Activated naive CD4-positive, alpha-beta T cell treated with anti-CD3 and anti-CD28 coated beads for 36 hours (primary cell): ENCODE measurements at regions of chr3 and their contacts with region 1.

Region 1: DNA sequence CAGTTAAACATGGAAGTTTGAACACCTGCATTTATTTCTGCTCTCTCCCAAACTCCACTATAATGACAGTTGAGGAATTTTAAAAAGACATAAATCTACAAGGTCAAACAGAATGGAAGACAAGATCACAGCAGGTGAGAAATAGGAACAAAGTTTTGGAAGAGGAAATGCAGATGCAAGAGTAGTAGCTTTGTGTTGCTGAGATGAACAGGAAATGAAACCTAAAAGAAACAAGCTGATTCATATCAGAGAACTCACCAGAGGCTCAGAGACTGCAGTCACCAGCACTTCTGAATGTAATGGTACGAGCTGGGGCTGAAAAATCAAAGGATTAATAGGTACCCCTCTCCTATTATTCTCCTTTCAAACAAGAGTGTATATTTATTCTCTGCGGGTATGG is 459.9 kb downstream of the RAP2B start:
- DNase-seq: peak; percentile 33
- H3K4me3 Mint-ChIP-seq: no peak overlapping the region
- H3K27ac Mint-ChIP-seq: peak overlapping the region; percentile 78
- H3K4me1 Mint-ChIP-seq: peaks cover 57% of the 10 kb centered on the region
- H3K27me3 Mint-ChIP-seq: no peaks in the 10 kb centered on the region

Region 2: GRCh38 chr3:152205097-152205593 is 1416.8 kb before region 1 on chr3:
- CTCF ChIA-PET with region 1: no interaction called
- intact Hi-C with region 1: loop called (anchors 10 kb)
- DNase-seq: no peak
- H3K4me3 Mint-ChIP-seq: peak overlapping the region; percentile 89
- H3K27ac Mint-ChIP-seq: peak overlapping the region; percentile 99
- H3K4me1 Mint-ChIP-seq: peaks cover 67% of the 10 kb centered on the region
- H3K27me3 Mint-ChIP-seq: no peaks in the 10 kb centered on the region

Region 3: DNA sequence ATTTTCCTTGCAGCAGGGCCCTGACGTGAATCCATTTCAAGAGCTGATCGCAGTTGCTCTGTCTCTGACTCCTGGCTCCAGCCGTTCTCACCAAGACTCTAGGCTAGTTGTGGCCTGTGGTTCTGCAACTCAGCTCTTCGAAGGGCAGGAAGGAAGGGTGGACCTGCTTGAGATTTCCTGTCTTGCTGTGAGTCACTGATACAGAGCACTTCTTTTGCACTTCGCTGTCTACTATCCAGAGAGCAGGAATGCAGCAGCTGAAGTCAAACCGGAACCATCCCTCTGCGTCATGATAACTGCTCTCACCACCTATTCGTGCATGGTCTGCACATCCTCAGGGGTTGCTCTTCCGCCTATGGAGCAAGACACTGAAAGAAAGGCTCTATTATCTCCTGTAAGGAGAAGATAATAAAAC is 400.2 kb before region 1 on chr3:
- CTCF ChIA-PET with region 1: no interaction called
- intact Hi-C with region 1: loop called (anchors 2 kb)
- DNase-seq: peak; percentile 73
- H3K4me3 Mint-ChIP-seq: peak overlapping the region; percentile 66
- H3K27ac Mint-ChIP-seq: peak overlapping the region; percentile 85
- H3K4me1 Mint-ChIP-seq: peaks cover 53% of the 10 kb centered on the region
- H3K27me3 Mint-ChIP-seq: no peaks in the 10 kb centered on the region

Region 4: GRCh38 chr3:153443961-153444360 is 178.0 kb before region 1 on chr3:
- CTCF ChIA-PET with region 1: interaction called, 3 read pairs
- intact Hi-C with region 1: loop called (anchors 5 kb)
- DNase-seq: no peak
- H3K4me3 Mint-ChIP-seq: no peak overlapping the region
- H3K27ac Mint-ChIP-seq: no peak overlapping the region
- H3K4me1 Mint-ChIP-seq: peaks cover 16% of the 10 kb centered on the region
- H3K27me3 Mint-ChIP-seq: no peaks in the 10 kb centered on the region

Region 5: DNA sequence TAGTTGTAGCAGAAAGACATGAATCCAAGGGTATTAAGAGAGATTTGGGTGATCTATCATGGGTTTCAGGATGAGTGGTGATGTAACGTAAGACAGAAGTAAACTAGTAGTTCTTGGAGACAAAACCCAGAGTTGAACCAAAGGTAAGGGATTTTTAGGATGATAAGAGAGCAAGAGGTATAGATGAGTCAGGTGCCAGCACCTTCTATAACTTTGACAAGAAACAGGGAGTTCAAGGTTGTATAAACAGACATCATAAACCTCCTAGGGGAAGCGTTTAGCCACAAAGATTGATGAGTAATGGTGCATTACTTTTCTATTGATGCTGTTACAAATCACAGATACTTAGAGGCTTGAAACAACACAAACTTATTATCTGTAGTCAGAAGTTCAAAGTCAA is 51.9 kb after region 1 on chr3:
- CTCF ChIA-PET with region 1: no interaction called
- intact Hi-C with region 1: loop called (anchors 1 kb)
- DNase-seq: no peak
- H3K4me3 Mint-ChIP-seq: no peak overlapping the region
- H3K27ac Mint-ChIP-seq: peak overlapping the region; percentile 48
- H3K4me1 Mint-ChIP-seq: peaks cover 11% of the 10 kb centered on the region
- H3K27me3 Mint-ChIP-seq: no peaks in the 10 kb centered on the region